PC-3 (cell line): ENCODE measurements at regions of chr17 and their contacts with region 1.

Region 1: DNA sequence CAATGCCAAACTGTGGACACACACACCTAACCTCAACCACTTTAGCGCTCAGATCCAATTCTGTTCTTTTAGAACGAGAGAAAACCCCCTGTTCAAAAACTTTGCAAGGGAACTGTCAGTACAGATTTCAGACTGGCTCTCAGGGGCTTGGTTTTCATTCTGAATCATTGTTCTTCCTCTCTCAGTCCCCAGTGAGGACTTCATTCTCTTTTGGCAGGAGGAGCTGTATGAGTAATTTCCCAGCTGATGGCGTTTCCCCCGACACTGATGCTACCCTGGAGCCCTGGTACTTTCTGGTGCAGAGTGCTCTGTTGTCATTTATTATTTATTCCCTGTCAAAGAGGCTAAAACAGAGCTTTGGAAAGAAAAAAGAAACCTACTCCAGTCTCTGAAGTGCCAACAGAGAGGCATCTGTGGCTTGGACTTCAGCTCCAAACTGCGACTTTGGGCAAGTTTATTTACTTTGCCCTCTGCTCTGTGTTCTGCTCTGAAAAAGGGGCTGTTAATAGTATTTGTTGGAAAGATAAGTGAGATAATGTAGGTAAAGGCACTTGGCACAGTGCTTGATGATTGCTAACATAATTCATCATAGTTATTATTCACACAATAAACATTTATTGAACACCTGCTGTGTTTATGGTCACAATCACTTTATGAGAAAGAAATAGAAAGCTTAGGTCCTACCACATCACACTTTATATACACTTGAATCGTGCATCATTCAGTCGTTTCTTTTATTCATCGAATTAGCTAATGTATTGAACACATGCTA is 28.3 kb downstream of the ETV4 start:
- DNase-seq: peak; percentile 64
- ATAC-seq: peak; percentile 86
- H3K4me3 ChIP-seq: no peak overlapping the region
- H3K27ac ChIP-seq: no peak overlapping the region
- H3K4me1 ChIP-seq: peaks cover 14% of the 10 kb centered on the region; the same call in 1 of the 2 replicates
- H3K27me3 ChIP-seq: no peaks in the 10 kb centered on the region
- CTCF ChIP-seq: no peak

Region 2: DNA sequence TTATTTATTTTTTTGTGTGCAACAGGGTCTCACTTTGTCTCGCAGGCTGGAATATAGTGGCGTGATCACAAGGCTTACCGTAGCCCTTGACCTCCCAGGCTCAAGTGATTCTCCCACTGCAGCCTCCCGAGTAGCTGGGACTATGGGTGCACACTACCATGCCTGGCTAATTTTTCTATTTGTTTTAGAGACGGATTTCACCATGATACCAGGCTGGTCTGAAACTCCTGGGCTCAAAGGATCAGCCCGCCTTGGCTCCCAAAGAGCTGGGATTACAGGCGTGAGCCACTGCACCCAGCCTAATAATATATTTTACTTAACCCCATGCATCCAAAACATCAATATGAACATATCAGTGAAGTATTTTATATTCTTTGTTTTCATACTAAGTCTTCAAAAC is 291.4 kb before region 1 on chr17:
- CTCF ChIA-PET with region 1: no interaction called
- POLR2A ChIA-PET with region 1: no interaction called
- intact Hi-C with region 1: no loop called
- DNase-seq: no peak
- ATAC-seq: no peak
- H3K4me3 ChIP-seq: no peak overlapping the region
- H3K27ac ChIP-seq: no peak overlapping the region
- H3K4me1 ChIP-seq: no peaks in the 10 kb centered on the region
- H3K27me3 ChIP-seq: no peaks in the 10 kb centered on the region
- CTCF ChIP-seq: no peak

Region 3: DNA sequence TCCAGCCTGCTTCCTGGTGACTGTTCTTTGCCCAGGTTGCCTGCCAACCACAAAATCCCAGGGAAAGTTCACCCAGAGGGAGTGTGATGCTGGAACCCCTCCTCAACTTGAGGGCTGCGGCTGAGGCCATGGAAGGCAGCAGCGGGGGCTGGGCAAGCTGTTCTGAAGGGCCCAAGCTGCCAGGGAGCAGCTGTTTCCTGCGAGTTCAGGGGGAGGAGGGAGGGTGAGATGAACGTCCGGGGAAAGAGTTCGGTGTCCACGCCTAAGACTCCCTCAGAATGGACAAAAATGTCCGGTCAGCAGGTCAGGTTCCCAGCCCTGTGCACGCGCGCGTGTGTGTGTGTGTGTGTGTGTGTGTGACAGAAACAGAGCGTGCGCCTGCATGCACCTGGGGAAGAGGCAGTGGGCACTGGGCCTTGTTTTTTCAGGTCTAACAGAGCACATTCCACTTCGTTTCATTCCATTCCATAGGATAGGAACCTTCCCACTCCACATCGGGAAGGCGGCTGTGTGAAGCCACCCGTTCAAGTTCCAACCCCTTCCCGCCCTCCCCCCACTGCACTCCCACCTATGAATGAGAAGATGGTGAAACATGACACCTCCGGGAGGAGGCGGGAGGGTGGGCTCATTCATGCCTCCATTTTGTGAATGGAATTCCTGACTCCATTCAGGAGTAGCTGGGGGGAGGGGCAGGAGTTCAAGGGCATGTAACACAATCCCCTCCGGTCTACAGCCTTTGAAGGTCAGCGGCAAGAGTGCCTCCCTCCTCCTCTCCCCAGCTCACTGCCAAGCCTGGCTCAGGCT is 12.7 kb after region 1 on chr17:
- CTCF ChIA-PET with region 1: no interaction called
- POLR2A ChIA-PET with region 1: interaction called, 25 read pairs
- intact Hi-C with region 1: no loop called
- DNase-seq: no peak
- ATAC-seq: no peak
- H3K4me3 ChIP-seq: no peak overlapping the region
- H3K27ac ChIP-seq: no peak overlapping the region
- H3K4me1 ChIP-seq: no peaks in the 10 kb centered on the region
- H3K27me3 ChIP-seq: no peaks in the 10 kb centered on the region
- CTCF ChIP-seq: no peak

Region 4: GRCh38 chr17:43576563-43577229 is 58.9 kb after region 1 on chr17:
- CTCF ChIA-PET with region 1: interaction called, 3 read pairs
- POLR2A ChIA-PET with region 1: no interaction called
- intact Hi-C with region 1: loop called (anchors 1 kb)
- DNase-seq: peak; percentile 93
- ATAC-seq: peak; percentile 72
- H3K4me3 ChIP-seq: no peak overlapping the region
- H3K27ac ChIP-seq: no peak overlapping the region
- H3K4me1 ChIP-seq: peaks cover 33% of the 10 kb centered on the region
- H3K27me3 ChIP-seq: no peaks in the 10 kb centered on the region
- CTCF ChIP-seq: peak; percentile 95